ENCODE measurements at regions of chr18 and their contacts with region 1.

Region 1: GRCh38 chr18:31819106-31819924 is 58.6 kb upstream of the SLC25A52 start:
- DNase-seq: peak; percentile 1
- H3K4me3 ChIP-seq: no peak overlapping the region
- H3K27ac ChIP-seq: no peak overlapping the region
- H3K27me3 ChIP-seq: peaks cover 2% of the 10 kb centered on the region
- CTCF ChIP-seq: peak; percentile 81

Region 2: GRCh38 chr18:31850844-31851243 is 31.5 kb after region 1 on chr18:
- CTCF ChIA-PET with region 1: interaction called, 11 read pairs
- POLR2A ChIA-PET with region 1: no interaction called
- DNase-seq: no peak
- H3K4me3 ChIP-seq: no peak overlapping the region
- H3K27ac ChIP-seq: no peak overlapping the region
- H3K27me3 ChIP-seq: no peaks in the 10 kb centered on the region
- CTCF ChIP-seq: no peak

Measured in AG04450 (cell line).